ENCODE measurements at regions of chr4 and their contacts with region 1.

Region 1: GRCh38 chr4:113781439-113782040 is 20.0 kb upstream of the CAMK2D start:
- DNase-seq: no peak
- ATAC-seq: peak in 1 of 2 donors; percentile 57

Region 2: DNA sequence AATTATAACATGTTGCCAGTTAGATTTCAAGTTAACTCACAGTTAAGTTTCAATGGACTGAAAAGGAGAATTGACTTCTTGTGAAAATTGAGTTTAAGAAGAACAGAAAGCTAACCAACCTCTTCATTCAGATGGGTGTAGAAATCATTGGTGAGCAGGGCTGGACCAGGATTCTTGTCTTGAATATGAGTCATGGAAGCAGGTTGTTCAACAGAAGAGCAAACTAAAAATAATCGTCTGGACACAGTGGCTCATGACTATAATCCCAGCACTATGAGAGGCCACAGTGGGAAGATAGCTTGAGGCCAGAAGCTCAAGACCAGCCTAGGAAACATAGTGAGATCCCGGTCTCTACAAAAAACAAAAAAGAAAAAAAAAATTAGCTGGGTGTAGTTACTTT is 99.7 kb after region 1 on chr4:
- intact Hi-C with region 1: loop called in 1 of 2 experiments (anchors 5 kb)
- DNase-seq: no peak
- ATAC-seq: peak in 1 of 2 donors; percentile 76

Region 3: DNA sequence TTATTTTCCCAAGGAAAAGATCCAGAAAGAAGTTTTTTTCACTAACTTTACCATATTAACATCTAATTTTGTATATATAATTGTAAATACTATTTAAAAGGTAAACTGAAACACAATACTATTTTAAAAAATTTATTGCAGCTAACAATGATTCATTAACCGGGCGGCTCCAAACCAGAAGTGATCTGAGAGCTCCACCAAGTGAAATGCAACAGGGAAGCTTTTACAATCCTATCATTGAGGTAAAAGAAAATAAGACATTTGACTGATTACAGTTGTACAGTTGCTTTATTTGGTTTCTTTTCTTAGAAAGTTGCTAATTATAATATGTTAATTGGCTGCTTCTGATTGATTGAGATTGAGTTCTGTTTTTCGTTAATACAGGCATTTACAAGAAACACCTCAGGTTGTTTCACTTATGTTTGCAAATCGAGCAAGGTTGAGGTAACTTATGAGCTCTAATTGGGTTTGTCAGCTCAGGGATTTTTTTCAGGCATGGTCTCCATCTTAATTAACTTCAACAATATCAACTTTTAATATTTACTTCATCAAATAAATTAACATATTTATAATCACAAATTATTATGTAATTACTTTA is 596.9 kb after region 1 on chr4:
- intact Hi-C with region 1: loop called in 1 of 2 experiments (anchors 10 kb)
- DNase-seq: no peak
- ATAC-seq: no peak

Measured in left cardiac atrium (tissue), 4 donors.